ENCODE measurements at regions of chr12 and their contacts with region 1.

Region 1: DNA sequence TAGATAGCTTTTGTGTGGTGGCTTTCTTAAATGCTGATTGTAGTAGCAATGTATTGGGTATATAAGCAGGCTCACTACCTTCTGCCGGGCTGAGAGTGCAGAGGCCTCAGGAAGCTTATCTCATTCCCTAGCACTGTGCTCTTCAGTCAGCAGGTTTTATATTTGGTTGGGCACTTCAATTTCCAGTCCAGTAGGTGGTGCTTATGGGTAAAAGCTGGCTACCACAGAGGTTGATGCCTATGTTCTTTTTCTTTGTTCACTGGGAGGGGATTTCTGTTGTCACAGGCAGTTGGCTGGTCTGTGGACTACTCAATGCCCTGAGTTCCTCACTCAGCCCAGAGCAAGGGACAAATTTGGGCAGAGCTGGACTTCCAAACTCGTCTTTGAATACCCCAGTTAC is 43.0 kb upstream of the GLIPR1 start:
- DNase-seq: peak; percentile 47 to 65 (median 63)
- H3K4me3 ChIP-seq: no peak overlapping the region
- H3K4me3 Mint-ChIP-seq: no peak overlapping the region
- H3K27ac ChIP-seq: peak overlapping the region in 1 of 2 donors; percentile 22
- H3K27ac Mint-ChIP-seq: peak overlapping the region in 5 of 7 donors; percentile 6 to 75 (median 30)
- H3K4me1 ChIP-seq: peaks cover 10 to 13% of the 10 kb centered on the region in 2 donors
- H3K4me1 Mint-ChIP-seq: peaks cover 18% of the 10 kb centered on the region
- H3K27me3 ChIP-seq: no peaks in the 10 kb centered on the region
- H3K27me3 Mint-ChIP-seq: peaks cover 0 to 3% (median 0%) of the 10 kb centered on the region in 3 donors
- CTCF ChIP-seq: peak; percentile 66

Region 2: GRCh38 chr12:75471902-75472890 is 34.6 kb after region 1 on chr12:
- intact Hi-C with region 1: loop called in 1 of 2 experiments (anchors 5 kb)
- DNase-seq: peak; percentile 73 to 90 (median 83)
- H3K4me3 ChIP-seq: peak overlapping the region in 1 of 3 experiments; percentile 60
- H3K4me3 Mint-ChIP-seq: peak overlapping the region in 1 of 2 donors; percentile 70
- H3K27ac ChIP-seq: peak overlapping the region; percentile 51 to 84
- H3K27ac Mint-ChIP-seq: peak overlapping the region; percentile 85 to 96 (median 94)
- H3K4me1 ChIP-seq: peaks cover 55 to 64% of the 10 kb centered on the region in 2 donors
- H3K4me1 Mint-ChIP-seq: peaks cover 54% of the 10 kb centered on the region
- H3K27me3 ChIP-seq: no peaks in the 10 kb centered on the region
- H3K27me3 Mint-ChIP-seq: no peaks in the 10 kb centered on the region
- CTCF ChIP-seq: no peak

Region 3: DNA sequence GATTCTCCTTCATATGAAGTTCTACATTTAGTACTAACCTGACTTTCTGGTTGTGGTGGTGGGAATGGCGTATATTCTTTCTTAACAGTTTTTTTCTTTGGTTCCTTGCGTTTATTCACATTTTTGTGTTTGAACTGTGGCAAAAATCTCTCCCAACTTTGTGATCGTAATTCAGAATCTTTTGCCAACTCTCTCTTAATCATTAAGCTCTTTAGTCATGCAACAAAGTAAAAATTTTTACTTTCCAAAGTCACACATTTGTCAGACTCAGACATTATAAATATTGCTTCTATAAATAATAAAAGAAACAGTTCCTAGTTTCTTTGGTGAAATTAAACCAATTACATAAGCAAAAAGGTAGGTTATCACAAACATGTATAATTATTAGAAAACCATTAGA is 66.3 kb after region 1 on chr12:
- intact Hi-C with region 1: no loop called
- DNase-seq: no peak
- H3K4me3 ChIP-seq: no peak overlapping the region
- H3K4me3 Mint-ChIP-seq: no peak overlapping the region
- H3K27ac ChIP-seq: no peak overlapping the region
- H3K27ac Mint-ChIP-seq: no peak overlapping the region
- H3K4me1 ChIP-seq: no peaks in the 10 kb centered on the region
- H3K4me1 Mint-ChIP-seq: no peaks in the 10 kb centered on the region
- H3K27me3 ChIP-seq: no peaks in the 10 kb centered on the region
- H3K27me3 Mint-ChIP-seq: no peaks in the 10 kb centered on the region
- CTCF ChIP-seq: no peak

Measured in CD14-positive monocyte (primary cell).